GM10248 (cell line): ENCODE measurements at regions of chr17 and their contacts with region 1.

Region 1: DNA sequence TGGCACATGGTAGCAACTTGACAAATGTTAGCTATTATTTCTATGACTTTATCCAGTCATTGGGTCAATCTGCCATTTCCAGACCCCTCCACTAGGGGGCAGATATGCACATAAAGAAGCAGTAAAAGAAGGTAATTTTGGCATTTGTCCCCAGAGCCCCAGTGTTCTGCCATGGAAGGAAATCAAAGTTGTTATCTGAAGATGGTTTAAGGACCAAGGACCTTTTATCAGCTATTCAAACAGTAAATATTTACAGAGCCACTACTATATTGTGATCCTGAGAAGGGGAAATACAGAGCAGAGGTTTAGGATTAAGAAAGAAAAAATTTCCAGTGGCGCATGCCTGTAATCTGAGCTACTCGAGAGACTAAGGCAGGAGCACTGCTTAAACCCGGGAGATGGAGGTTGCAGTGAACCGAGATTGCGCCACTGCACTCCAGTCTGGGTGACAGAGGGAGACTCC is 20.0 kb downstream of the TRAF4 start:
- DNase-seq: peak; percentile 71
- CTCF ChIP-seq: peak; percentile 77

Region 2: GRCh38 chr17:28750178-28751047 is 13.4 kb before region 1 on chr17:
- CTCF ChIA-PET with region 1: interaction called, 210 read pairs
- POLR2A ChIA-PET with region 1: interaction called, 5 read pairs
- DNase-seq: peak; percentile 84
- CTCF ChIP-seq: peak; percentile 100

Region 3: GRCh38 chr17:28812091-28812747 is 48.4 kb after region 1 on chr17:
- CTCF ChIA-PET with region 1: interaction called, 15 read pairs
- POLR2A ChIA-PET with region 1: no interaction called
- DNase-seq: peak; percentile 99
- CTCF ChIP-seq: no peak

Region 4: GRCh38 chr17:28861393-28862203 is 97.8 kb after region 1 on chr17:
- CTCF ChIA-PET with region 1: interaction called, 11 read pairs
- POLR2A ChIA-PET with region 1: no interaction called
- DNase-seq: no peak
- CTCF ChIP-seq: no peak

Region 5: DNA sequence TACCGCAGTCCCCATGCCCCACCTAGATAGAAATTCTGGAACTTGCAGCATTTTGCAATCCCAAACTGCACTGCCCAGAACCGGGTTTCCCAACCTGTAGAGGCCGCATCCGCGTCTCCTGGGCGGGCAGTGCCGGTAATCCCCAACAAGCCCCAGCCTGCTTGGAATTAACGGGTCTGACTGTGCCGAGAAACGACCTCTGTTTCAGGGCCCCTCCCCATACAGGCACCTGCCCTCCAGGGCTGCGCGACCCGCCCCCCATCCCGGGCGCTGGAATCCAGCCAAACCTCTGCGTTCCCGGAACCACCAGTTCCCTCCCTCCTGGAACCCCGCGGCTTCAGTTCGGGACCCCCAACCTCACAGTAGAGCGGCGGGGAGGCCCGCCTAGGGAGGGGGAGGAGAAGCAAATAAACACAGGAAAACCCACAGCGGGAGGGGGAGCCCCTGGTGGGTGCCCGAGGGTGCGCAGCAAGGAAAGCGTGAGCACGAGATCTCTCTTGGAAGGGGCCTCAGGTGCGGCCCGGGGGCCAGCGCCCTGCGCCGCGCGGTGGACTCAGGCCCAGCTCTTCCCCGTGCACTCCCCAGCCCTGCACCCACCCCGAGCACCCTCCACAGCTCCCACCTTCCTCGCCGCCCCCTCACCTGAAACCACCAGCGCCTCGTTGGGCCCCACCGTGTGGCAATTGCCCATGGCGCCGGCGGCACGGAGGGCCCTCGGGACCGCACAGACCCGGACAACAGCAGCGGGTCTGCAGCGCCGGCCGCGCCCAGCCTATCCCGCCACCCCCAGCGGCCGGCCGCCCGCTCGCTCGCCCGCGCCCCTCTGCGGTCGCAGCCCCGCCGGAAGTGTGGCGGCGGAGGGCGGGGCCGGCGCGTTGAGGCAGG is 133.3 kb after region 1 on chr17 and contains the start of gene FLOT2:
- CTCF ChIA-PET with region 1: interaction called, 89 read pairs
- POLR2A ChIA-PET with region 1: interaction called, 5 read pairs
- DNase-seq: peak; percentile 56
- CTCF ChIP-seq: no peak

Region 6: DNA sequence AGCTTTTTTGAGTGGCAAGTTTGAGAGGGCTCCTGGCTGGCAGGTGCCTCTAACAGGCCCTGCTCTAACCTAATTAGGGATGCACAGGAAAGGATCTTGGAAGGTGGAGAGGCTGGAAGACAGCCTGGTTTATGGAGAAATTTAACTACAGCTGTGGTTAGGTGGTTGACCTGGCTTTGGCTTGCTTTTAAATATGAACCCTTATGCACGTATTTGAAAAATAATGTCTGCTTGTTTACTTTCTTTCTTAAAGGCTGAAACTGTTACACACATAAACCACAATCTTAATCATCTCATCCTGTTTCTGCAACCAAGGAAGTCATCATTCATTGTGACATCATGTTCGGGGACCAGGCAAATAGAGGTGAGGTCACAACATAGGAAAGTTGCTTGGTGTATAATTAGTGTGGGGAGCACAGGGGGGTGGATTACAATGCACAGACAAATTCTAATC is 162.1 kb after region 1 on chr17:
- CTCF ChIA-PET with region 1: interaction called, 14 read pairs
- POLR2A ChIA-PET with region 1: no interaction called
- DNase-seq: peak; percentile 51
- CTCF ChIP-seq: no peak